Activated B cell treated with CpG ODN at 0.5 μM for 24 hours (primary cell): ENCODE measurements at regions of chr10 and their contacts with region 1.

Region 1: DNA sequence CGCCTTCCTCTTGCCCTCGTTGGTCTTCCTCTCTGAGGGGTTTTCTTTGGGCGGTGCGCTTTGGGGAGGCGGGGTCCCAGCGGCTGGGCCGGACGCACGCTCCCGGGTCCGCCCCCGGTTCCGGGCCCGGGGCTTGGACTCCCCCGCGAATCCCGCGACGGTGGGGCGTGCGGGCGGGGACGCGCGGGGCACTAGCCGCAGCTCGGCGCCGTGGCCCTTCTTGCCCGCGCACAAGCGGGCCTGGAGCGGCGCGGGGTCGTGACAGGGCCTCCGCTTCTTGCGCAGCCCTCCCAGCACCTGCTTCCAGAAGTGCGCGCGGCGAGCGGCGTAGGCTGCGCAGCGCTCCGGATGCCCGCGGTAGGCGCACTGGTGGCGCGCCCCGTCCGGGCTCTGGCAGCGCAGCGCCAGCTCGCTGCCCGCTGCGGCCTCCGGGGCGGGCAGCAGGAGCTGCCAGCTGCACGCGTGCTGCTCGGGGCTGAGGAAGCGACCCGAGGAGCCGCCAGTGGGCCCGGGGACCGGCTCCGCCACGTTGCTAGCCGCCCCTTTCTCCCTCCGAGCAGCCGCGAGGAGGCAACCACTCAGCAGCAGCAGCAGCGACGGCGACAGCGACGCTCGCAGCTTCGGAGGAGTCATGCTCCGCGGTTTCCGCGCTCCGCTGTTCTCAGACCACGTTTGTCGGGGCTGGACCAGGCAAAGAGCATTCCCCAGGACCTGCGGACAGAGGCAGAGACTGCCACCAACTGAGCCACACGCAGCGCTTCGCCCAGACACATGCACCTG is 759 bp downstream of the FGFBP3 start:
- DNase-seq: peak; percentile 74
- ATAC-seq: peak; percentile 84
- H3K4me3 Mint-ChIP-seq: peak overlapping the region; percentile 92
- H3K27ac Mint-ChIP-seq: peak overlapping the region; percentile 86
- H3K4me1 Mint-ChIP-seq: peaks cover 19% of the 10 kb centered on the region
- H3K27me3 Mint-ChIP-seq: peaks cover 3% of the 10 kb centered on the region
- CTCF ChIP-seq: no peak

Region 2: DNA sequence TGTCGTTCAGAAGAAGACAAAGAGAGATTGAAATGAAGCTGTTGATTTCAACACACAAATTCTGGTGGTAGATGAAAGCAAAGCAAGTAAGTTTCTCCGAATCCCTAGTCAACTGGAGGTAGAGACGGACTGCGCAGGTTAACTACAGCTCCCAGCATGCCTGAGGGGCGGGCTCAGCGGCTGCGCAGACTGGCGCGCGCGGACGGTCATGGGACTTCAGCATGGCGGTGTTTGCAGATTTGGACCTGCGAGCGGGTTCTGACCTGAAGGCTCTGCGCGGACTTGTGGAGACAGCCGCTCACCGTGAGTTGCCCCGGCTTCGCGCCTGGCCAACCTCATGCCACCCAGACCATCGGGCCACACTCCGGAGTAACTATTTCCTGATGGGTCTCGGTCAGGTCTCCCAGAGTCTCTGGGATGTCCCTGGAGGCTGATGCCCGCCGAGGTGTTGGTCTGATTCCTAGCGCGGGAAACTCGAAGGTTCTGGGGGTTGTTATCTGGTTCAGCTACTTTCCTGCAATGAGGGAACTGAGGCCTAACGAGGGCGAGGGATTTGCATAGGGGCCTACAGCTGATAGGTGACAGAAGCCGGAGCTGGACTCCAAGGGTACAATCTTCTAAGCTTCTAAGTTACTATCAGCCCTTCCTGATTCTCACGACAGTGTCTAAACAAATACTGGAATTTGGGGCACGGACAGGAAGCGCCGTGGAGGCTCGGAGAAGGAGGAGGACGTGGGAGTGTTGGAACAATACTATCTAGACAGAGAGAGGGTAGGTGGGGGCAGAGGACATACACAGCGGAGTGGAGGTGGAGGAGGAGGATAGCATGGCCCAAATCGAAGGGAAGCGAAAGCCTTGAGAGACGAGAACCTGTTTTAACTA is 1036.5 kb before region 1 on chr10 and contains the start of gene RPP30:
- CTCF ChIA-PET with region 1: no interaction called
- POLR2A ChIA-PET with region 1: interaction called, 3 read pairs
- intact Hi-C with region 1: loop called (anchors 5 kb)
- DNase-seq: peak; percentile 77
- ATAC-seq: peak; percentile 97
- H3K4me3 Mint-ChIP-seq: peak within 1 kb of the TSS; percentile 96
- H3K27ac Mint-ChIP-seq: peak within 1 kb of the TSS; percentile 89
- H3K4me1 Mint-ChIP-seq: peaks cover 30% of the 10 kb centered on the region
- H3K27me3 Mint-ChIP-seq: peaks cover 14% of the 10 kb centered on the region
- CTCF ChIP-seq: no peak
- total RNA-seq, gene RPP30: 43.7 and 44.6 TPM in 2 replicates

Region 3: GRCh38 chr10:91389636-91390512 is 518.7 kb before region 1 on chr10:
- CTCF ChIA-PET with region 1: interaction called, 5 read pairs
- POLR2A ChIA-PET with region 1: no interaction called
- intact Hi-C with region 1: loop called (anchors 1 kb)
- DNase-seq: no peak
- ATAC-seq: peak; percentile 91
- H3K4me3 Mint-ChIP-seq: no peak overlapping the region
- H3K27ac Mint-ChIP-seq: no peak overlapping the region
- H3K4me1 Mint-ChIP-seq: peaks cover 3% of the 10 kb centered on the region
- H3K27me3 Mint-ChIP-seq: peaks cover 13% of the 10 kb centered on the region
- CTCF ChIP-seq: peak; percentile 73

Region 4: GRCh38 chr10:91632671-91633550 is 275.6 kb before region 1 on chr10 and contains the start of gene PPP1R3C:
- CTCF ChIA-PET with region 1: interaction called, 4 read pairs
- POLR2A ChIA-PET with region 1: no interaction called
- intact Hi-C with region 1: loop called (anchors 1 kb)
- DNase-seq: peak; percentile 32
- ATAC-seq: peak; percentile 74
- H3K4me3 Mint-ChIP-seq: peak within 1 kb of the TSS; percentile 75
- H3K27ac Mint-ChIP-seq: no peak within 1 kb of the TSS
- H3K4me1 Mint-ChIP-seq: peaks cover 14% of the 10 kb centered on the region
- H3K27me3 Mint-ChIP-seq: peaks cover 46% of the 10 kb centered on the region
- CTCF ChIP-seq: no peak
- total RNA-seq, gene PPP1R3C: not detected in 2 replicates

Region 5: GRCh38 chr10:91856637-91857036 is 51.9 kb before region 1 on chr10:
- CTCF ChIA-PET with region 1: interaction called, 3 read pairs
- POLR2A ChIA-PET with region 1: no interaction called
- intact Hi-C with region 1: loop called (anchors 2 kb)
- DNase-seq: no peak
- ATAC-seq: no peak
- H3K4me3 Mint-ChIP-seq: no peak overlapping the region
- H3K27ac Mint-ChIP-seq: no peak overlapping the region
- H3K4me1 Mint-ChIP-seq: no peaks in the 10 kb centered on the region
- H3K27me3 Mint-ChIP-seq: no peaks in the 10 kb centered on the region
- CTCF ChIP-seq: no peak

Region 6: DNA sequence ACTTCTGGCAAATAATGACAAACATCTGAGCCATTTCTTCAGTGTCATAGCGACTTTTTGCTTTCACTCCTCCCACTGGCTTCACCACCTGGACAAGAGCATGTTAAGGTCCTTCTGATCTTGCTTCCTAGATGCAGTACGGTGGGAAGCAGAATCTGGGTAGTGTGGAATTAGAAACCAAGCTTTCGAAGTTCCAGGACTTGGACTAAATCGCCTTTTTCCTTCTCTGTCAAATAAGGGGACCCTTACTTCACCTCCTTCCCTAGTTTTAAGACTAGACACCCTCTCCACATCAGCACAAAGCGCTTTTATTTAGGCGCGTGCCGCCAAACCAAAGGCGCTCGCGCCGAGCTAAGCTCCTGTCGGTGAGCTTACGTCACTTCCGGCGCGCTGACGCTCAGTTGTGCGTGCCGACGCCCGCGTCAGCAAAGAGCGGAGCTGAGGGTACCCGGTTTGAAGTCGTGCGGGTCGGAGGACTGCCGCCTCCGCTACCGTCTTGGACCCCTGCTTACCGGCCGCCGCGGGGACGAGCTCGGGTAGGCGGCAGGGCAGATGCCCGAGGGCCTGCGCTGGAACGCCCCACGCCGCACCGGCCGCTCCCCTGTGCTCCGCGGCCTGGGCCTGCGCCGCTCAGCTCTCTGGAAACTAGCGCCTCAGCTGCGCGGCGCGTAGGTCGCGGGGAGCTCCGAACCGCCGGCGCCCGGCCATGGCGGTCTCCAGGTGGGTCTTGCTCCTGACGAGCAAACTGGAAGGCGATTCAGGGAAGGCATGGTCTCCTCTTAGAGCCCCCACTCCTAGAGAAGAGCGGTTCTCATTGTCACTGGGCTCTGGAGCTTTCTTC is 15.1 kb after region 1 on chr10 and contains the start of gene BTAF1:
- CTCF ChIA-PET with region 1: interaction called, 17 read pairs
- POLR2A ChIA-PET with region 1: interaction called, 47 read pairs
- intact Hi-C with region 1: loop called (anchors 1 kb)
- DNase-seq: peak; percentile 91
- ATAC-seq: peak; percentile 94
- H3K4me3 Mint-ChIP-seq: peak within 1 kb of the TSS; percentile 92
- H3K27ac Mint-ChIP-seq: peak within 1 kb of the TSS; percentile 96
- H3K4me1 Mint-ChIP-seq: peaks cover 42% of the 10 kb centered on the region
- H3K27me3 Mint-ChIP-seq: no peaks in the 10 kb centered on the region
- CTCF ChIP-seq: no peak
- total RNA-seq, gene BTAF1: 63.4 and 74.7 TPM in 2 replicates